ENCODE measurements at regions of chr7 and their contacts with region 1.

Region 1: DNA sequence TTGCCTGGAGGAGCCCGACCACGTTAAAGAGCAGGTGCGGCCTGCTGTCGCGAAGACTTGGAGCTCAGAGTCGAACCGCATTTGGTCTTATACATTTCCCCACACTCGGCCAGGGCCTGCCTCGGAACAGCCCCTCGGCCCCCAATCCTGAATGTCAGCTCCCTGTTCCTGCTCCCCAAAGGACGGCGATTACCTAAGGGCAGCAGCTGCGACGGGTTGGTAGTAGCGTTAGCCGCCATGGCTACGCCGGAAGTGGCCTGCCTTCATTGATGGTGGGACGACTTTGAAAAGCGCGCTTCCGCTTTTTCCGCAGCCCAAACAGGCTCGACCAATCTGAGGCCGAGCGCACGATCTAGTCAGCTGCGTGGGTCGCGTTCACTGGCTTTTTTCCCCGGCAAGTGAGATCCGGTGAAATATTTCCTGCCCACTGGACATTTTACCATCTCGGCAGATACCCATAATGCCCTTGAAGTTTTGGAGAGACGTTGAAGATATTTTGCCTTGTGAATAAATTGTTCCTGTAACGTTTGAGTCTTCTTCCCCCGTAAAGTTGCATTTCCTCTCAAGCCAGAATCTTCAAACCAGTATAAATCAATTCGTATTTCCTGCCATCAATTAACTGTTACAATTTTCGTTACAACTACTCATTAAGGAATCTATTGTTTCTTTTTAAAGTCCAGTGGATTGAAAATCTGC is at the start of gene LSM5:
- DNase-seq: peak; percentile 93
- ATAC-seq: peak; percentile 67
- H3K4me3 ChIP-seq: peak within 1 kb of the TSS; percentile 91
- H3K27ac ChIP-seq: peak within 1 kb of the TSS; percentile 70
- H3K4me1 ChIP-seq: peaks cover 14% of the 10 kb centered on the region; the same call in 1 of the 2 replicates
- H3K27me3 ChIP-seq: no peaks in the 10 kb centered on the region
- CTCF ChIP-seq: no peak
- total RNA-seq, gene LSM5: 24.8 and 38.9 TPM in 2 replicates

Region 2: DNA sequence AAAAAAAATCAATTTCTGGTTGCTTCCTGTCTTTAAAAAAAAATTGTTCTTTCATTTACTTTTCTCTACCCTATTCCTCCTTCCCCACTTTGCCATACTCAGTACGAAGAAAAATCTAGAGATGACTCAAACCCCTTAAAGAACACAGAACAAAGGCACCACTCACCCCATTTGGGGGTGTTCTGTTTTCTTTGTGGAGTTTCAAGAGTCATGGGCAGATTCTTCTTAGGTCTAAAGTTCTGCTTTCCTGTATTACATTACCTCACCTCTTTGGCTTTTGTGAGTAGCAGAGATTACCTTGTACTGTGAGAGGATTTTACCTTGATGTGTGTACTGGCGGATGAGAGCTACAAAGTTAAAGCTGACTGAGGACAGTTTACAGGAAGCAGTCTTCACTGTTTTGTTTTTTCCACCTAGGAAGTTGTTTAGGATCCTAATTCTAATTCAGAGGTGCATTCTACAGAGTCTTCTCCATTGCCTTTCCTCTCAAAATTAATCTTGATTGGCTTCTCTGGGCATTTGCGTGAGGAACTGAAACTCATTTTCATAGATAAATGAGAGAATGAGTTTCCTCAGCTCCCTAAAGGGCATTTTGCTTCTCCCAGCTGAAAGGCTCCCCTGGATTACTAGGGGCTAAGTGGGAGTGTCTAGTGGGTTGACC is 25.7 kb after region 1 on chr7:
- CTCF ChIA-PET with region 1: no interaction called
- POLR2A ChIA-PET with region 1: no interaction called
- intact Hi-C with region 1: no loop called
- DNase-seq: no peak
- ATAC-seq: no peak
- H3K4me3 ChIP-seq: no peak overlapping the region
- H3K27ac ChIP-seq: no peak overlapping the region
- H3K4me1 ChIP-seq: no peaks in the 10 kb centered on the region
- H3K27me3 ChIP-seq: no peaks in the 10 kb centered on the region
- CTCF ChIP-seq: no peak

Region 3: DNA sequence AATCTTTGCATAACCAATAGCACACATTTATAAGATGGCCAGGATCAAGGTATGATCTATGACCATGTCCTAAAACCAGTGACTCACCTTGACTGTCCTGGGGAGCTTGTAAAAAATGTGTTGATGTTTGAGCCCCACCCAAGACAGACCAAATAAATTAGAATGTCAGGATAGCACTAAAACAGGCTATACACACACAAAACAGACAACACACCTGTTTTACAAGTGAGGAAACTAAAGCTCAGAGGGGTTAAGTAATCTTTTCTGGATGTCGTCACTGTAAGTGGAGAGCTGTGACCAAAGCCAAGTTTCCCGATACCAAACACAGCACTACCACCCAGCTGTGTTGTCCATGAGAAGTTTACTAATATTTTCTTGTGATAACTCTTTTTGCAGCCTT is 89.5 kb after region 1 on chr7:
- CTCF ChIA-PET with region 1: no interaction called
- POLR2A ChIA-PET with region 1: no interaction called
- intact Hi-C with region 1: loop called (anchors 5 kb)
- DNase-seq: peak; percentile 65
- ATAC-seq: peak; percentile 98
- H3K4me3 ChIP-seq: no peak overlapping the region
- H3K27ac ChIP-seq: peak overlapping the region; percentile 49
- H3K4me1 ChIP-seq: peaks cover 9% of the 10 kb centered on the region
- H3K27me3 ChIP-seq: no peaks in the 10 kb centered on the region
- CTCF ChIP-seq: no peak

Region 4: DNA sequence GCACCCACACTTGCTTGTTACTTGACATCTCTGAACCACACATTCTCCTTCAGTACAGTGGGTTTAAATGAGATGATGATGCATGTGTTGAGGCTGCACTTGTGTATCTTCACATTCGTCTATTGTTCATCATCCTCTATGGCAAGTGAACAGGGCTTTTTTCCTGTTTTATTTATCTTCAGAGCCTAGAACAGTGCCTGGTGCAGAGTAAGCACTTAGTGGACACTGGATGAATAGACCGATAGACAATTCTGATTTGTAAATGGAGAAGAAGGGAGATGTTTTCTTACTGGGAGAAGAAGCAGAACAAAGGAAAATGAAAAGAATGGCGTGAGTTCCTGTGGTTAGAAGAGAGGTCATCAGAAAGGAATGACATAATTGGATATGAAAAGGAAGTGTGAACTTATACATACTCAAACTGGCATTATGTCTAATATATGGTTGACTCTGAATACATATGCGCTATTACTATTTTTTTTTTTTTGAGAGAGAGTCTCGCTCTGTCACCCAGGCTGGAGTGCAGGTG is 104.8 kb after region 1 on chr7:
- CTCF ChIA-PET with region 1: no interaction called
- POLR2A ChIA-PET with region 1: no interaction called
- intact Hi-C with region 1: no loop called
- DNase-seq: no peak
- ATAC-seq: no peak
- H3K4me3 ChIP-seq: no peak overlapping the region
- H3K27ac ChIP-seq: no peak overlapping the region
- H3K4me1 ChIP-seq: no peaks in the 10 kb centered on the region
- H3K27me3 ChIP-seq: no peaks in the 10 kb centered on the region
- CTCF ChIP-seq: no peak

Region 5: GRCh38 chr7:32631590-32632449 is 141.5 kb after region 1 on chr7:
- CTCF ChIA-PET with region 1: no interaction called
- POLR2A ChIA-PET with region 1: no interaction called
- intact Hi-C with region 1: loop called (anchors 1 kb)
- DNase-seq: no peak
- ATAC-seq: no peak
- H3K4me3 ChIP-seq: no peak overlapping the region
- H3K27ac ChIP-seq: no peak overlapping the region
- H3K4me1 ChIP-seq: no peaks in the 10 kb centered on the region
- H3K27me3 ChIP-seq: no peaks in the 10 kb centered on the region
- CTCF ChIP-seq: no peak